ENCODE measurements at regions of chr15 and their contacts with region 1.

Region 1: DNA sequence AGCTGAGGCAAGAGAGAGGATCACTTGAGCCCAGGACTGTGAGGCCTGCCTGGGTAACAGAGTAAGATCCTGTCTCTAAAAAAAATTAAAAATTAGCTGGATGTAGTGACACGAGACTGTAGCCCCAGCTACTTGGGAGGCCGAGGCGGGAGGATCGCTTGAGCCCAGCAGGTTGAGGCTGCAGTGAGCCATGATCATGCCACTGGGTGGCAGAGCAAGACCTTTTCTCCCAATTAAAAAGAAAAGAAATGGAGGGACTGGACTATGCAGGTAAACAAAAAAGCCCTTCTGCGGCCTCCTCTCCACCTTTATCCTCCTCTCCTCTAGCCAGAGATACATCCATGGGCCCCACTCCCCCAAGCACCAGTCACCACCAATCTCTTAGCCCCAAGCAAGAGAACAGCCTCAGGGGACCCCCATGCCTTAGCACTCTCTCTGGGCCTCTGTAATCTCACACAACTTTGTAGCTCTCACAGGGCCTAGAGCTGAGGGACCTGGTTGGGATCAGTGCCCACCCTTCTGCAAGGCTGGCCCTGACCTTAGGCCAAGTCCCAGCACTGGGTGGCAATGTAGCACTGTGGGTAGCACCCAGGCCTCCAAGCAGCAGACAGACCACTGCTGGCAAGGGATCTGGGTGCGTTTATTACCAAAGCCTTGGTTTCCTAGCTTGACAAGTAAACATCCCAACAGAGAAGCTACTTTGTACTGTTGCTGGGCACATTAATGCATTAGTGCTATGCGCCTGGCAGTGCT is 43.4 kb downstream of the FAM174B start:
- DNase-seq: no peak
- H3K4me3 Mint-ChIP-seq: no peak overlapping the region
- H3K27ac Mint-ChIP-seq: no peak overlapping the region
- H3K4me1 Mint-ChIP-seq: peaks cover 1% of the 10 kb centered on the region
- H3K27me3 Mint-ChIP-seq: peaks cover 18% of the 10 kb centered on the region
- CTCF ChIP-seq: no peak

Region 2: DNA sequence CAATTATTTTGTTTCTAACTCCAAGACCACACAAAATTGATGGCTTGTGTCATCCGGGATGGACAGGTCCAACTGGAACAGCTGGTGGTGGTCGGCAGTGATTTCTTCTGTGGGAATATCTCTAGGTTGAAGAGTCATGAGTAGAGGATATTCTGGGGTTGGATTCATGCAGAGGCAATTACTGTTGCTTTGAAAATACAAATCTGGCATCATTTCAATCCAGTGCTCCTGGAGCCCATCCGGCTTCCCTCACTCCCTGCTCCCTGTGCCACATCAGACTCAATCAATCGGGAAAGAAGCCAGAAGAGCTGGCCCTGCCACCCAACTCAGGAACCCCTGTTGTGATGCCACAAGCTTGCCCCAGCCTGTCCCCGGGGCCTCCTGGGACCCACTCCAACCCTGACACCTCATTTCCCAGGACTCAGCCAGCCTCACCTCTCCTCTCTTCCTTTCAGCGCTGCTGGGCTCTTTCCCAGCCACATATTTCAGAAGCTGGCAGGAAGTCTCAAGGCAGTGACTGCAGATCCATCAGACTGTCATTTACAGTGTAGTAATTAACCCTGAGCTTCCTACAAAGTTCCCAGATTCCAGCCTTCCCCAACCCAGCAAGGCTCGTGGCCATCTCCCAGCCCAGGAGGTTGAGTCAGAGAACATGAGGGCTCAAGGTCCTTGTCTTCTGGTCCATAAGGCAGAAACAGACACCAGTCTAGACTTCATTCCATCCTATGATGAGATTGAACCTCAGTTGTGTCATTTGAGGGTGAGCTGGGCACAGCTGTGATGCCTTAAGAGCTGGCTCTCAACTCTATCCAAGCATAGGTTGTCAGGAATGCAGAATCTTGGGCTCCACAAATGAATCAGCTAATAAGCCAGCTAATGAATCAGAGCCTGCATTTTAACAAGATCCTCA is 70.6 kb before region 1 on chr15:
- CTCF ChIA-PET with region 1: no interaction called
- intact Hi-C with region 1: no loop called
- DNase-seq: no peak
- H3K4me3 Mint-ChIP-seq: no peak overlapping the region
- H3K27ac Mint-ChIP-seq: no peak overlapping the region
- H3K4me1 Mint-ChIP-seq: no peaks in the 10 kb centered on the region
- H3K27me3 Mint-ChIP-seq: peaks cover 37% of the 10 kb centered on the region
- CTCF ChIP-seq: no peak

Region 3: GRCh38 chr15:92670621-92671020 is 58.5 kb after region 1 on chr15:
- CTCF ChIA-PET with region 1: no interaction called
- intact Hi-C with region 1: loop called (anchors 1 kb)
- DNase-seq: no peak
- H3K4me3 Mint-ChIP-seq: no peak overlapping the region
- H3K27ac Mint-ChIP-seq: no peak overlapping the region
- H3K4me1 Mint-ChIP-seq: peaks cover 9% of the 10 kb centered on the region
- H3K27me3 Mint-ChIP-seq: peaks cover 75% of the 10 kb centered on the region
- CTCF ChIP-seq: no peak

Region 4: GRCh38 chr15:92683232-92683834 is 71.2 kb after region 1 on chr15:
- CTCF ChIA-PET with region 1: no interaction called
- intact Hi-C with region 1: loop called (anchors 1 kb)
- DNase-seq: peak; percentile 48
- H3K4me3 Mint-ChIP-seq: no peak overlapping the region
- H3K27ac Mint-ChIP-seq: no peak overlapping the region
- H3K4me1 Mint-ChIP-seq: no peaks in the 10 kb centered on the region
- H3K27me3 Mint-ChIP-seq: peaks cover 69% of the 10 kb centered on the region
- CTCF ChIP-seq: peak; percentile 26